Lower leg skin (tissue), 4 donors: ENCODE measurements at regions of chr12 and their contacts with region 1.

Region 1: DNA sequence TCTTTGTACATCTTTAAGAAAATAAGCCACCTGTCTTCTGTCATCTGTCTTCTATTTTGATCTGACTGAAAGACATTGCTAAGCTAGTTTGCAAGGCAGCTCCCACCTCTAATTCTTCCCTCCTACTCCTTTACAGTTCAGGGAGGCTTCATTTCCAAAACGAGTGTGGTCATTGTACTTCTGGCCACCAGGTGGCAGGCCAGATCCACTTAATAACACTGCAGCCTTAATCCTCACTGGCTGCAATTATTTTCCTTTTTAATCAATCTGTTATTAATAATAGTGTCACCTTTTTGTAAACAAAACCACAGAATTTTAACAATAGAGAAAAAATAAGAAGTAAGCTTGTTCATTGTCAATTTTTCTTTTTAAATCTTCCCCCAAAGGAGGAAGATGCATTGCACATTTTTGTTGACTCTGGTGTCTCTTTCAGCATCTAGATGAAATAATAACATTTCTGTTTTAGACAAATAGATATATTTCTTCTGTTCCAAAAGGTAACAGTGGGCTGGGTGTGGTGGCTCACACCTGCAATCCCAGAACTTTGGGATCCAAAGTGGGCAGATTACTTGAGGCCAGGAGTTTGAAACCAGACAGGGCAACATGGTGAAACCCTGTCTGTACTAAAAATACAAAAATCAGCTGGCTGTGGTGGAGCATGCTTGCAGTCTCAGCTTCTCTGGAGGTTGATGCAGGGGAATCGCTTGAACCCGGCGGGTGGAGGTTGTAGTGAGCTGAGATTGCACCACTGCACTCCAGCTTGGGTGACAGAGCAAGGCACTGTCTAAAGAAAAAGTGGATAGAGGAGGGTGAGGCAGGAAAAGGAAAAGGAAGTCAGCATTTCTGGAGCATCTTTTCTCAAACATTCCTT is 23.3 kb downstream of the GABARAPL1 start:
- DNase-seq: no peak
- H3K4me3 ChIP-seq: no peak overlapping the region
- CTCF ChIP-seq: peak in 1 of 3 donors; percentile 61
- POLR2A ChIP-seq: no peak

Region 2: GRCh38 chr12:10310926-10311720 is 75.1 kb after region 1 on chr12:
- intact Hi-C with region 1: loop called (anchors 2 kb)
- DNase-seq: no peak
- H3K4me3 ChIP-seq: no peak overlapping the region
- CTCF ChIP-seq: no peak
- POLR2A ChIP-seq: no peak

Region 3: GRCh38 chr12:10673660-10674384 is 437.8 kb after region 1 on chr12 and contains the start of gene STYK1:
- intact Hi-C with region 1: loop called (anchors 2 kb)
- DNase-seq: peak; percentile 44 to 87
- H3K4me3 ChIP-seq: peak within 1 kb of the TSS; percentile 16
- CTCF ChIP-seq: peak in 1 of 3 donors; percentile 41
- POLR2A ChIP-seq: no peak
- total RNA-seq, gene STYK1: 2.0 to 2.5 (median 2.2) TPM